Right cardiac atrium (tissue), 5 donors: ENCODE measurements at regions of chr17 and their contacts with region 1.

Region 1: DNA sequence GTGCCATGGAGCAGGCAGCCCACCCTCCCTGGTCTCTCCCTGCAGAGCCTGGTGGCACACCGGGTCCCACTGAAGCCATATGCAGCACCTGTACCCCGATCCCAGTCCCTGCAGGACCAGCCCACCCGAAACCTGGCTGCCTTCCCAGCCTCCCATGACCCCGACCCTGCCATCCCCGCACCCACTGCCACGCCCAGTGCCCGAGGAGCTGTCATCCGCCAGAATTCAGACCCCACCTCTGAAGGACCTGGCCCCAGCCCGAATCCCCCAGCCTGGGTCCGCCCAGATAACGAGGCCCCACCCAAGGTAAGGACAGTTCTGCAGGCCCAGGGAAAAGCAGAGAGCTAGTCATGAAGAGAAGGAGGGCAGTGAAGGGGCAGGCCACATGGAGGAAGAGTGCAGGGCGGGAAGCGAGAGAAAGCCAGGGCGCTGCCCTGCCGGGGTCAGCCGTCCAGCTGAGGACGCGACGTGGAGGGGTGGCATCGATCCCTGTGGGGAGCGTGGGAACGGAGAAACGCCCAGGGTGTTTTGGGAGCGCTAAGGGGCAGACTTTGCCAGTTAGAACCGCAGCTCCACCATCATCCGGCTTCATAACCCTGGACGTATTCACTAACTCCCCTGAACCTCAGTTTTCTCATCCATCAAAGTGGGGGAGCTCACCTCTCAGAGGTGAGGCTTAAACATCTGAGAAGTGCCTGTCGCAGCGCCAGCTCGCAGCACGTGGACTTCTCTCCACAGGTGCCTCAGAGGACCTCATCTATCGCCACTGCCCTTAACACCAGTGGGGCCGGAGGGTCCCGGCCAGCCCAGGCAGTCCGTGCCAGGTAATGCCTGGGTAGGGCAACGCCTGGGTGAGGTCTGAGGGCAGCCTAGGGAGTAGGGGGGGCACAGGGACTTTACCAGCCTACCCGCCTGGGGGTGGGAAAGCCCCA is 7.7 kb upstream of the C17orf107 start:
- DNase-seq: peak in 1 of 3 donors; percentile 71
- ATAC-seq: no peak
- H3K4me3 ChIP-seq: no peak overlapping the region
- H3K27ac ChIP-seq: no peak overlapping the region
- H3K4me1 ChIP-seq: no peaks in the 10 kb centered on the region
- H3K27me3 ChIP-seq: no peaks in the 10 kb centered on the region

Region 2: DNA sequence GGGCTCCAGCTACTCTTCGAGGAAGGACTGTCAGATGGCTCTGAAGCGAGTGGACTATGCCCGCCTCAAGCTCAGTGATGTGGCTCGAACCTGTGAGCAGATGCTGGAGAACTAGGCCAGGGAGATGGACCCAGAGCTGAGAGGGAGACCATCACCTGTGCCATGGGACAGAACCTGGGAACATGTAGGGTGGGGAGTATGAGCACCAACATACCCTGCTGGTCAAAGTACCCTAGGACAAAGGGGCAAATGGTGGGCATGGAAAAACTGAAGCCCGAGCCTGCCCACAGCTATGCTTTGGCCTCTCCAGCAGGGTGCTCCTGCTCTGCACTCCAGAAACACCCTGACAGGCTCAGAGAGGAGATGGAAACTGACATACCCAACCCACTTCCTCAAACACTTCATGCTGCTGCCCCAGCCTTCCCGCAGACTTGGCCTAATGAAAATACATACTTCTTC is 158.6 kb before region 1 on chr17:
- intact Hi-C with region 1: loop called in 2 of 4 experiments (anchors 5 to 10 kb)
- DNase-seq: peak in 2 of 3 donors; percentile 65 to 69
- ATAC-seq: no peak
- H3K4me3 ChIP-seq: no peak overlapping the region
- H3K27ac ChIP-seq: no peak overlapping the region
- H3K4me1 ChIP-seq: no peaks in the 10 kb centered on the region
- H3K27me3 ChIP-seq: no peaks in the 10 kb centered on the region

Region 3: DNA sequence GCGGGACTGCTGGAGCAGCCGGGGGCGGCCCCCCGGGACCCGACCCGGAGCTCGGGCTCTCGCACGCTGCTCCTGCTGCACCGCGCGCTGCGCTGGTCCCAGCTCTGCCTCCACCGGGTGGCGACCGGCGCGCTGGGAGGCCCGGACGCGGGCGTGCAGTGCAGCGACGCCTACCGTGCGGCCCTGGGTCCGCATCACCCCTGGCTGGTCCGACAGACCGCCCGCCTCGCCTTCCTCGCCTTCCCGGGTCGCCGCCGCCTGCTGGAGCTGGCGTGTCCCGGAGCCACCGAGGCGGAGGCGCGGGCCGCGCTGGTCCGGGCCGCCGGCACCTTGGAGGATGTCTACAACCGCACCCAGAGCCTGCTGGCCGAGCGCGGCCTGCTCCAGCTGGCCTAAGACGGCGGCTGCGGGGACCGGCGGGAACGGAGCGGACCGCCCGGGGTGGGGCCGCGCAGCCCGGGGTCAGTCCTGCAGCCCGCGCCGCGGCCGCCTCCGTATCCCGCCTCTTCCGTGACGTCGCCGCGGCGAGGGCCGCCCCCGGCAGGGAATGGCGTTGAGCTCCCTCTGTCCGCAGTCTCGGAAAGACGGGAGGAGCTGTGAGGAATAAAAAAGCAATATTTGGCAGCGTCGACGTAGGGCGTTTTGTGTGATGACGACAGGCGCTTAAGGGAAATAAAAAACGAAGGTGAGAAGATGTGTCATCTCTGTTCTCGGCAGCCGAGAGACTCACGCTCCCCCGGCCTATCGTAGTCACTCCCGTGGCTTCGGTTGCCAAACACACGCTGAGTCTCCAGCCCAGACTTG is 101.6 kb before region 1 on chr17:
- intact Hi-C with region 1: loop called (anchors 2 to 10 kb)
- DNase-seq: peak; percentile 85 to 95 (median 94)
- ATAC-seq: peak; percentile 95 to 96
- H3K4me3 ChIP-seq: peak overlapping the region; percentile 59
- H3K27ac ChIP-seq: peak overlapping the region; percentile 85
- H3K4me1 ChIP-seq: no peaks in the 10 kb centered on the region
- H3K27me3 ChIP-seq: no peaks in the 10 kb centered on the region

Region 4: GRCh38 chr17:4872786-4873185 is 18.9 kb before region 1 on chr17:
- intact Hi-C with region 1: no loop called
- DNase-seq: no peak
- ATAC-seq: peak; percentile 55 to 65
- H3K4me3 ChIP-seq: no peak overlapping the region
- H3K27ac ChIP-seq: no peak overlapping the region
- H3K4me1 ChIP-seq: no peaks in the 10 kb centered on the region
- H3K27me3 ChIP-seq: no peaks in the 10 kb centered on the region

Region 5: GRCh38 chr17:4934173-4934979 is 42.7 kb after region 1 on chr17:
- intact Hi-C with region 1: no loop called
- DNase-seq: peak in 2 of 3 donors; percentile 67 to 79
- ATAC-seq: peak; percentile 28 to 38
- H3K4me3 ChIP-seq: no peak overlapping the region
- H3K27ac ChIP-seq: peak overlapping the region; percentile 66
- H3K4me1 ChIP-seq: peaks cover 9% of the 10 kb centered on the region
- H3K27me3 ChIP-seq: no peaks in the 10 kb centered on the region

Region 6: DNA sequence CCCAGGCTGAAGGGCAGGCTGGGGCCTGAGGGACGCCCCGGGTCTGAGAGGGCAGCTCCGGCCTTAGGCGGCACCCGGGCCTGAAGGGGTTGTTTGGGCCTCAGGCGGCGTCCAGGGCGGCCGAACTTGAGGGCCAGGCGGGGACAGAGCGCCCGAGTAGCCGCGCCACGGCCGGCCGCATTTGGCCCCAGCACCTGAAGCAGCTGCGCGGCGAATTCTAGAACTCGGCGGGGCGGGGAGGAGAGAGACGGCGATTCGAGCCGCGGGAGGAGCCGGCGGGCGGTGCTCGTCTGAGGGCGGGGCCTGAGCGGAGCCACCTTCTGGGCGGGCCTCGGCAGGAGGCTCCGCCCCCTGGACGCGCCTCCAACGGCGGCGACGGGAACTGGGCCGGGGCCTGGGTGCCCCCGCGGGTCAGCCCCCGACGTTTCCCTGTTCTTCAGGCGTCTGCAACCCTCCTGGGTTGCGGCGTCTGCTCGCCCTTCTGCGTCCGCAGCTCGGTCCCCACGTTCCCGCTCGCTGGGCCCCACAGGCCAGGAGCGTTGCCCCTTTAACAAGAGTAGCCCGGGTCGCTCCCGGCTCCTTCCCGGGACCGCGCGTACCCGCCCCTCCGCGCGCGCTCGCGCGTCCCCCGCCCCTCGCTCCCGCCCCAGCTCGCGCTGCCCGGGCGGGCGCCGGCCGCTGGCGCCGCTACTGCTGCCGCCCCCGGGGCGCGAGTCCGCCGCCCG is 105.8 kb after region 1 on chr17 and contains the starts of genes INCA1 and KIF1C:
- intact Hi-C with region 1: no loop called
- DNase-seq: peak; percentile 95 to 98 (median 98)
- ATAC-seq: peak; percentile 93 to 94
- H3K4me3 ChIP-seq: peak within 1 kb of the TSS; percentile 89
- H3K27ac ChIP-seq: peak within 1 kb of the TSS; percentile 94
- H3K4me1 ChIP-seq: no peaks in the 10 kb centered on the region
- H3K27me3 ChIP-seq: no peaks in the 10 kb centered on the region
- total RNA-seq, gene INCA1: 2.2 to 3.8 (median 3.2) TPM
- total RNA-seq, gene KIF1C: 519 to 727 (median 570) TPM